A673 (cell line): ENCODE measurements at regions of chr17 and their contacts with region 1.

Region 1: DNA sequence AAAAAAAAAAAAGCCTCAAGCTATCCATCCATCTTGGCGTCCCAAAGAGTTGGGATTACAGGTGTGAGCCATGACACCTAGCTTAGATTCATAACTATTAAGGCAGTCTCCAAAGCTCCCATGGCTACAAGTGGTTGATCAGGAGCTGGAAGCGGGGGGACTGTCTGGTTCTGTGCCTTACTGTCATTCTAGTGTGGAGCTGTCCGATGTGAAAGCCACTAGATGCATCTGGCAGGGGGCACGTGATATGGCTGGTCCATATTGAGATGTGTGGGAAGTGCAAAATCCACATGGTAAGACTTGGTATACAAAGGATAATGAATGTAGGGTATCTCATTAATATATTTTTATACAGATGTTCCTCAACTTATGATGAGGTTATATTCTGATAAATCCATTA is 38.7 kb downstream of the KPNA2 start:
- DNase-seq: no peak
- H3K4me3 ChIP-seq: no peak overlapping the region
- H3K27ac ChIP-seq: no peak overlapping the region
- H3K4me1 ChIP-seq: no peaks in the 10 kb centered on the region
- H3K27me3 ChIP-seq: no peaks in the 10 kb centered on the region
- CTCF ChIP-seq: no peak

Region 2: DNA sequence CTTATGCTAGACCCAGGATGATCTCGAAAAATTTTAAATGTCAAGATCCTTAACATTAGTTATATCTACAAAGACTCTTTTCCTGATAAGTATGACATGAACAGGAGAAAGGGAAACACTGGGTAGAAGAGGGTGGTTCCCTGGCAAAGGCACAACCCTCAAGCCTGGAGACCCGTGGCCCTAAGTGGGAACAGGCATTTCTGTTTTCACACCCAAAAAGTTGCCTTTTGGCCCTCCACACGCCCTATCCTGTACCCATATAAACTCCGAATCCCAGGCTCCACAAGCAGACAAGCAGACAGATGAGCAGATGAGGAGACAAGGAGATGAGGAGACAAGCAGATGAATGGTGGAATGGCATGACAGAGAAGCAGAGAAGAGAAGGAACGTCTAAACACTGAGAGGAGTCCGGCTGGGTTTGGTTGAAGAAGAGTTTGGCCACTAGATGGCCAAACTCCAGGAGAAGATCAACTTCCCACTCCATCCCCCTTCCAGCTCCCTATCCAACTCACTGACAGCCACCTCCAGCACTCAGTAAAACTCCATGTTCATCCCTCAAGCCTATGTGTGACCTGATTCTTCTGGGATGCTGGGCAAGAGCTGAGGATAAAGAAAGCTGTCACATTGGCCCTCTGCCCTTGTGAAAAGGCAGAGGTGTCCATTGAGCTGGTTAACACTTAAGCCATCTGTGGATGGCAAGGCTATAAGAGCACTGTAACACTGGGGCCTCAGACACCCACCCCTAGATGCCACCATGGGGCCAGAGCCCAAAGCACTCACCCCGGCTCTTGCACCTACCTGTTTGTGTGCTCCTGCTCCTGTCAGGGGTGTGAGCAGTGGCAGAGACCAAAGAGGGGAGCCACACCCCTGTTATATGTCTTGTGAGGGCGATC is 666.5 kb after region 1 on chr17:
- CTCF ChIA-PET with region 1: interaction called, 10 read pairs
- POLR2A ChIA-PET with region 1: no interaction called
- intact Hi-C with region 1: no loop called
- DNase-seq: peak; percentile 11
- H3K4me3 ChIP-seq: no peak overlapping the region
- H3K27ac ChIP-seq: no peak overlapping the region
- H3K4me1 ChIP-seq: no peaks in the 10 kb centered on the region
- H3K27me3 ChIP-seq: no peaks in the 10 kb centered on the region
- CTCF ChIP-seq: peak; percentile 40; the same call in 1 of the 2 replicates